Activated CD4-positive, alpha-beta T cell treated with anti-CD3 and anti-CD28 coated beads for 36 hours (primary cell): ENCODE measurements at regions of chr3 and their contacts with region 1.

Region 1: DNA sequence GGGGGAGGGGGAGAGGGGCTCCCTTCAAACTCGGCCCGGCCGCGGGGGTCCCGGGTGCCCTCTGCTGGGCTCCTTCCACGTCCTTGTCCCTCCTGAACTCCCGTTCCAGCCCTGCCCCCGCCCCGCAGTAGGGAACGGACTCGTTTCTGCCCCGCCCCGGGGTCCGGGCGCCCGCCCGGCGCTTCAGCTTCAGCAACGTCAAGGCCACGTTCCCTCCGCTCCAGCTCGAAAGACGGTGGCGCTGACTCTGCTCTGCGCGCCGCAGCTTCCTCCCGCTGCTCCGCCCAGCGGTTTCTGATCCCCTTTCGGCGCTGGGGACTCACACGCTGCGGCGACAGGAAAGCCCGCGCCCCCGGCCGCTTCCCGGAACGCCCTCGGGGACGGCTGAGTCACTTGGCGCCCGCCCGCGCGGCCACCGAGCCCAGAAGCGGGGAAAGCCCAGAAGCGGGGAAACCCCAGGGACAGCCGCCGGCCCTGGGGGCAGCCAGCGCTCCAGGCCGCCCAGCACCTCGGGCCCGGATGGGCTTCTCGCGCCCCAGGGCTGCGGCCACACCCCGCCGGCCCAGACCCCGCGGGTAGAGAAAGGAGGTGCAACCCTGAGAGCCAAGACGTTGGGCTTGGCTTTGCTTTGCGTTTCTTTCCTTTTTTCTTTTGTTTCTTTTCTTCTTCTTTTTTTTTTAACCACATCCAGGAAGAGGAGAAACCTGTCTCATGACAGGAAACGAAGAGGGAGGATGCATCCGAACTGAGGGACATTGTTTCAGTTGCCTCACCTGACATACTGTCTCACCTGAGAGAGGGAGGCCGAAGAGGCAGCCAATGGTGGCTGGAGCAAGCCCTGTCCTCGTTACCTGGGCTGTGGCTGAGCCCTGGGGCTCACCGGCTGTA is 28.9 kb downstream of the ARHGAP31 start:
- DNase-seq: peak; percentile 97
- ATAC-seq: peak; percentile 92
- H3K4me3 Mint-ChIP-seq: peak overlapping the region; percentile 83
- H3K27ac Mint-ChIP-seq: peak overlapping the region; percentile 87
- H3K4me1 Mint-ChIP-seq: peaks cover 46% of the 10 kb centered on the region
- H3K27me3 Mint-ChIP-seq: no peaks in the 10 kb centered on the region

Region 2: GRCh38 chr3:119352849-119353502 is 29.9 kb after region 1 on chr3:
- CTCF ChIA-PET with region 1: interaction called, 4 read pairs
- POLR2A ChIA-PET with region 1: interaction called, 3 read pairs
- intact Hi-C with region 1: loop called (anchors 1 kb)
- DNase-seq: no peak
- ATAC-seq: peak; percentile 63
- H3K4me3 Mint-ChIP-seq: no peak overlapping the region
- H3K27ac Mint-ChIP-seq: peak overlapping the region; percentile 32
- H3K4me1 Mint-ChIP-seq: peaks cover 34% of the 10 kb centered on the region
- H3K27me3 Mint-ChIP-seq: no peaks in the 10 kb centered on the region

Region 3: DNA sequence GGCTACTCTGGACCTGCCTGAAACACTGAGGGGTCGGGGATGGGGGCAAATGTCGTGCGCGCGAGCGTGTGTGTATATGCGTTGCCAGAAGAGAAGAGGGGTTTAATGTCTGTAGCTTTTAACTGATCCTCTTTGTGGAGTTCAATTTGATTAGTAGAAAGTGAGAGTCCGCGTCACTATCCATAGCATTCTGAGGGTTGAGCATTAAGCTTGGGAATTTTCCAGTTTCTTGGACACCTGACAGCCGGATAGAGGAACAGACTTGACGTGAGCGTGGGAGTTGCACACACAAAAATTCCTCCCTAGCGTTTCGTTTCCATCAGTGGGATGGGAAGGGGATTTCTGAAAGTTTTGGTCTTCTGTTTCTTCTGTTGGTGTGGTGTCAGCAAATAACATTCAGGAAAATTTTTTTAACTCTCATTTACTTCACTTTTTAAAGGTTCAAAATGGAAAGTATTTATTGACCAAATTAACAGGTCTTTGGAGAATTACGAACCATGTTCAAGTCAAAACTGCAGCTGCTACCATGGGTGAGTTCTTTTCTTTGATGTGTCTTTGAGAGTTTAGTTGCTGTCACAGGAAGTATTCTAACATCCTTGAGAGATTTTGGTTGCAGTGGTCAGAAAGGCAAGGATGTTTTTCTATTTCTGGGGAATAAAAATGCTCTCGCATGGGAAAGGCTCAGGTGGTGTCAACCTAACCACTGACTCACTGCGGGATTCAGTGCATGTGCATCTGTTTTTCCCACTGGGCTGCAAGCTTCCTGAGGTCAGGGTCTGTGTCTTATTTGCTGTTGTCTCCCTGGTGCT is 146.5 kb after region 1 on chr3:
- CTCF ChIA-PET with region 1: no interaction called
- POLR2A ChIA-PET with region 1: no interaction called
- intact Hi-C with region 1: loop called in 1 of 2 experiments (anchors 2 kb)
- DNase-seq: no peak
- ATAC-seq: peak; percentile 47
- H3K4me3 Mint-ChIP-seq: peak overlapping the region; percentile 83
- H3K27ac Mint-ChIP-seq: peak overlapping the region; percentile 90
- H3K4me1 Mint-ChIP-seq: peaks cover 35% of the 10 kb centered on the region
- H3K27me3 Mint-ChIP-seq: no peaks in the 10 kb centered on the region

Region 4: GRCh38 chr3:120147072-120147871 is 824.2 kb after region 1 on chr3:
- CTCF ChIA-PET with region 1: no interaction called
- POLR2A ChIA-PET with region 1: no interaction called
- intact Hi-C with region 1: no loop called
- DNase-seq: peak; percentile 65
- ATAC-seq: peak; percentile 57
- H3K4me3 Mint-ChIP-seq: no peak overlapping the region
- H3K27ac Mint-ChIP-seq: no peak overlapping the region
- H3K4me1 Mint-ChIP-seq: peaks cover 27% of the 10 kb centered on the region
- H3K27me3 Mint-ChIP-seq: no peaks in the 10 kb centered on the region